Left cardiac atrium (tissue), 4 donors: ENCODE measurements at regions of chr3 and their contacts with region 1.

Region 1: DNA sequence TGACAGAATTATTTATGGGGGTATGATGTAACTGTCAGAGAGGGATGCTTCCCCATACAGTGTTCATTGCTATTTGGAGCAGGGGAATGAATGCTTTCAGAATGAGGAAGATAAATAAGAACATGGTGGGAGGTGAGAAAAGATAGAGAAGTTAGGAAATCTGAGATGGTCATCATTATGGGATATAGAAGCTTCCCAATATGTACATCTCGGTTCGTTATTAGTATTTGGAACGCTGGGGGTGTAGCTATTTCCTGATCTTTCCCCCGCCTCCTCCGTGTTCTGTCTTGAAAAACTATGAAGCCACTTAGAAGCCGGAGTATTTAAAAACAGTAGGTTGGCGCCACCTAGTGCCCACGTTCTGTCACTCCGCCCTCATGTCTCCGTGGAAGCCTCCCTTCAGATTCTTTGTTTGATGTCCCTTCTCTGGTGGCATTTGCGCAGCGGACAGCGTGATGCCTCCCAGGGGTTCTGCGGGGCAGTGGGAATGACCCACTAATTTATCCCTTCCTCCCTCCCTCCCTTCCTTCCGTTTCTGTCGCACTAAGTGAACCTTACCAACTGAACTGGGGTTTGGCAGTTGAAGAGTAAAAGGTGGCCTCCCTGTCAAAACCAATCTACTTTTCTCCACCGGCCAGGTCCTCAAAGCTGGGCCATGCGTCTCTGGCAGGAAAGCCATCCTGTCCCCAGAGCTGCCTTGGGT is 184.5 kb downstream of the FEZF2 start:
- DNase-seq: peak; percentile 80
- ATAC-seq: peak; percentile 70 to 76

Region 2: DNA sequence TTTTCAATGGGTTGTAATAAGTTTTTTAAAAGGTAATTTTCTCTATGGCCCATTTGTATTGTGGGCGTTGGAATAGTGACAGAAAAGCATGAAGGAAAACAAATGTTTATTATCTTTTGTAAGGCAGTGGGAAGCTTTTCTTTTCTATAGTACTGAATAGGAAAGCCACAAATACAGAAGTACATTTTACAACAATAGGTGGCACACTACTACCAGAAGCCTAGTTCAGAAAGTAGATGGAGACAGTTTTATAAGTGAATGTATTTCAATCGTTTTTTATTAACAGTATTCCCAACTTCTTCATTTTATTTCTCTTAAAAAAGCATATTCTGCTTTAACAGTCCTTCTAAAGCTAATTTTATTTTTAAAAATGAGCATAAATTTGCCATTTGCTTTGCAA is 330.8 kb before region 1 on chr3:
- intact Hi-C with region 1: loop called (anchors 5 to 10 kb)
- DNase-seq: no peak
- ATAC-seq: peak; percentile 43 to 69

Region 3: DNA sequence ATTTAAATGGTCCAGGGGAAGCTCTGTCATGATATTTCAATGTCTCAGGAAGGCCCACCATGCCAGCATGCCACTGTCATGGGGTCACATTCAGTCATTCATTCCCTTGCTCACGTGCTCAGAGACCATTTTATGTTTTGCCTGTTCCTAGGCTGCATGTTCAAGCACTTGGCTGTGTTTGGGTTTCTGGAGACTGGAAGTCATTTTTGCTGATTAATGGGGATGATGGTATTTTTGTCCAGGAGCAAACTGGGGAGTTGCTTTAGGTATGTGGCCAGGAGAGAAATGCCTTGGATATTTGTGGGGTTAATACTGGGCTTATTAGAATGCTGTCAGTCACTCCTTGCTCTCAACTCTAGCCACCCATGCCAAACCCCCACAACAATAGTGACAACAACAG is 323.9 kb before region 1 on chr3:
- intact Hi-C with region 1: loop called in 1 of 2 experiments (anchors 10 kb)
- DNase-seq: no peak
- ATAC-seq: no peak

Region 4: GRCh38 chr3:61927332-61927731 is 261.5 kb before region 1 on chr3:
- intact Hi-C with region 1: loop called in 1 of 2 experiments (anchors 10 kb)
- DNase-seq: peak; percentile 84
- ATAC-seq: peak; percentile 92 to 95